CD4-positive, alpha-beta memory T cell (primary cell): ENCODE measurements at regions of chr10 and their contacts with region 1.

Region 1: GRCh38 chr10:89369156-89370105 is 8.4 kb upstream of the IFIT1B start:
- DNase-seq: peak in 4 of 5 donors; percentile 16 to 22 (median 19)
- H3K4me3 ChIP-seq: no peak overlapping the region
- H3K4me3 Mint-ChIP-seq: no peak overlapping the region
- H3K27ac ChIP-seq: no peak overlapping the region
- H3K27ac Mint-ChIP-seq: no peak overlapping the region
- H3K4me1 ChIP-seq: peaks cover 15% of the 10 kb centered on the region
- H3K4me1 Mint-ChIP-seq: peaks cover 11 to 17% (median 13%) of the 10 kb centered on the region in 4 donors
- H3K27me3 ChIP-seq: no peaks in the 10 kb centered on the region
- H3K27me3 Mint-ChIP-seq: peaks cover 2% of the 10 kb centered on the region in 2 donors

Region 2: GRCh38 chr10:89257581-89257980 is 111.8 kb before region 1 on chr10:
- CTCF ChIA-PET with region 1: interaction called, 12 read pairs
- POLR2A ChIA-PET with region 1: no interaction called
- intact Hi-C with region 1: no loop called
- DNase-seq: no peak
- H3K4me3 ChIP-seq: no peak overlapping the region
- H3K4me3 Mint-ChIP-seq: no peak overlapping the region
- H3K27ac ChIP-seq: no peak overlapping the region
- H3K27ac Mint-ChIP-seq: peak overlapping the region in 1 of 7 donors; percentile 32
- H3K4me1 ChIP-seq: no peaks in the 10 kb centered on the region
- H3K4me1 Mint-ChIP-seq: peaks cover 0 to 4% (median 3%) of the 10 kb centered on the region in 4 donors
- H3K27me3 ChIP-seq: no peaks in the 10 kb centered on the region
- H3K27me3 Mint-ChIP-seq: peaks cover 7 to 8% of the 10 kb centered on the region in 2 donors

Region 3: GRCh38 chr10:89296220-89296648 is 73.2 kb before region 1 on chr10:
- CTCF ChIA-PET with region 1: interaction called, 24 read pairs
- POLR2A ChIA-PET with region 1: interaction called, 9 read pairs
- intact Hi-C with region 1: loop called (anchors 1 kb)
- DNase-seq: no peak
- H3K4me3 ChIP-seq: no peak overlapping the region
- H3K4me3 Mint-ChIP-seq: no peak overlapping the region
- H3K27ac ChIP-seq: no peak overlapping the region
- H3K27ac Mint-ChIP-seq: peak overlapping the region in 1 of 7 donors; percentile 31
- H3K4me1 ChIP-seq: peaks cover 7% of the 10 kb centered on the region
- H3K4me1 Mint-ChIP-seq: peaks cover 5 to 12% (median 7%) of the 10 kb centered on the region in 4 donors
- H3K27me3 ChIP-seq: no peaks in the 10 kb centered on the region
- H3K27me3 Mint-ChIP-seq: no peaks in the 10 kb centered on the region

Region 4: DNA sequence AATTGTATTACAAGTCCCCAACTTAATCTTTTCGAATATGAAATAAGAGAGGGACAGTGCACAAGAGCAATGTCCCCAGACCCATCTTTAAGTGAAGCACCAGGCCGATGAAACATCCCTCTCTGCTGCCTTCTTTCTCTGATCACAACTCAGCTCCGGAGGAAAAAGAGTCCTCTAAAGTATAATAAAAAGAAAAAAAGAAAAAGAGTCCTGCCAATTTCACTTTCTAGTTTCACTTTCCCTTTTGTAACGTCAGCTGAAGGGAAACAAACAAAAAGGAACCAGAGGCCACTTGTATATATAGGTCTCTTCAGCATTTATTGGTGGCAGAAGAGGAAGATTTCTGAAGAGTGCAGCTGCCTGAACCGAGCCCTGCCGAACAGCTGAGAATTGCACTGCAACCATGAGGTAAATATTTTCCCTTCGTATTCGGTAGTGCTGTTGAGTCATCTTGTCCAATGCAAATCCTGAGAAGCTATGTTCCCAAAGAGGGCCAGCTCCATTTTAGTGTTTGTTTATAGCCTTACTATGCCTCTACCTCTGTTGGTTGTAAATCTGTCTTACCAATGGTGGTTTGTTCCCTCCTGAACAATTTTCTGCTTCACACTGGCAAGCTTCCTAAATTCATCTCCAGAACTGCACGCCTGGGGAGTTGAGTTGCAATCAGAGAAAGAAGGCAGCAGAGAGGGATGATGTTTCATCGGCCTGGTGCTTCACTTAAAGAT is 67.5 kb before region 1 on chr10 and contains the start of gene IFIT2:
- CTCF ChIA-PET with region 1: interaction called, 24 read pairs
- POLR2A ChIA-PET with region 1: interaction called, 9 read pairs
- intact Hi-C with region 1: loop called (anchors 2 kb)
- DNase-seq: peak; percentile 52 to 70 (median 62)
- H3K4me3 ChIP-seq: peak within 1 kb of the TSS; percentile 63 to 69
- H3K4me3 Mint-ChIP-seq: peak within 1 kb of the TSS; percentile 90 to 98 (median 94)
- H3K27ac ChIP-seq: peak within 1 kb of the TSS; percentile 75
- H3K27ac Mint-ChIP-seq: peak within 1 kb of the TSS; percentile 96 to 99 (median 98)
- H3K4me1 ChIP-seq: peaks cover 30% of the 10 kb centered on the region
- H3K4me1 Mint-ChIP-seq: peaks cover 22 to 40% (median 28%) of the 10 kb centered on the region in 4 donors
- H3K27me3 ChIP-seq: no peaks in the 10 kb centered on the region
- H3K27me3 Mint-ChIP-seq: no peaks in the 10 kb centered on the region
- total RNA-seq, gene IFIT2: 10.4 to 10.7 TPM

Region 5: GRCh38 chr10:89563861-89564478 is 194.5 kb after region 1 on chr10:
- CTCF ChIA-PET with region 1: interaction called, 3 read pairs
- POLR2A ChIA-PET with region 1: no interaction called
- intact Hi-C with region 1: loop called (anchors 5 kb)
- DNase-seq: peak in 4 of 5 donors; percentile 40 to 48 (median 44)
- H3K4me3 ChIP-seq: no peak overlapping the region
- H3K4me3 Mint-ChIP-seq: no peak overlapping the region
- H3K27ac ChIP-seq: no peak overlapping the region
- H3K27ac Mint-ChIP-seq: no peak overlapping the region
- H3K4me1 ChIP-seq: no peaks in the 10 kb centered on the region
- H3K4me1 Mint-ChIP-seq: no peaks in the 10 kb centered on the region
- H3K27me3 ChIP-seq: no peaks in the 10 kb centered on the region
- H3K27me3 Mint-ChIP-seq: peaks cover 8 to 11% of the 10 kb centered on the region in 2 donors

Region 6: DNA sequence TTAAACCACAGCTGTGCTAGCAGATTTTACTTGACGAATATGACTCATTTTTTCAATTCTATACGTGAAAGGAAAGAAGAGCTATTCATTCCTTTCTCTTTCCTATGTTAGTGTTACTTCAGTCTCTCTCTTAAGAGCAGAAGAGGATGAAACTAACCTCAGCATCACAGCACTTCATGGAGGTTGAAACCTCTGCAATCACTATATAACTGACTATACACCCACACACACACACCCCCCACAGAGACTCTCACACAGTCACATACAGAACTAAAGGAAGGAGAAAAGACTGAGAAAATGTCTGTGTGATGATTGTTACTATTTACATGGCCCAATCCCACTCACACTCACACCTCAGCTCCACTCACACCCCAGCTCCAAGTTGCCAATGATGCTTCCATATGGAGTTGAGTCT is 436.2 kb after region 1 on chr10:
- CTCF ChIA-PET with region 1: no interaction called
- POLR2A ChIA-PET with region 1: no interaction called
- intact Hi-C with region 1: no loop called
- DNase-seq: no peak
- H3K4me3 ChIP-seq: no peak overlapping the region
- H3K4me3 Mint-ChIP-seq: no peak overlapping the region
- H3K27ac ChIP-seq: no peak overlapping the region
- H3K27ac Mint-ChIP-seq: peak overlapping the region in 1 of 7 donors; percentile 25
- H3K4me1 ChIP-seq: no peaks in the 10 kb centered on the region
- H3K4me1 Mint-ChIP-seq: peaks cover 0 to 4% (median 2%) of the 10 kb centered on the region in 4 donors
- H3K27me3 ChIP-seq: no peaks in the 10 kb centered on the region
- H3K27me3 Mint-ChIP-seq: peaks cover 0 to 8% of the 10 kb centered on the region in 2 donors